ENCODE measurements at regions of chr6 and their contacts with region 1.

Region 1: GRCh38 chr6:121305957-121306607 is 28.2 kb downstream of the TBC1D32 start:
- DNase-seq: no peak
- ATAC-seq: peak in 3 of 4 donors; percentile 79 to 89 (median 88)
- H3K4me3 ChIP-seq: no peak overlapping the region
- H3K27ac ChIP-seq: no peak overlapping the region
- H3K4me1 ChIP-seq: peaks cover 0 to 2% (median 0%) of the 10 kb centered on the region in 3 donors
- H3K27me3 ChIP-seq: no peaks in the 10 kb centered on the region
- CTCF ChIP-seq: peak; percentile 11 to 52 (median 40)

Region 2: DNA sequence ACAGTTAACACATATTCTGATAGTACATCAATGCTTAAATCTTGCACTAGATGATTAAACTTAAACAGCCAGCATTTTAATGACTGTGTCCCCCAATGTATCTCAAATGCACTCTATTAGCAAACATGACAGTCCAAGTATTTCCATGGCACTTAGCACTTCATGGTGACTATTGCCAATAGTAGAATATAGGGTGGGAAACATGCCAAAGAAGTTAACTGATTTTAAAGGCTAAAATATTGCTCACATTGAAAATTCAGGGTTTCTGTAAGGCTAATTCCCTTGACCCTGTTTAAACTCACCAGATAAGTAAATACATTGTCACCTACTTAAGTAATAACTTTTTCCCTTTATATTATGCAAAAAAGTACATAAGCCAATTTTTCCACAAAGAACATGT is 238.7 kb before region 1 on chr6:
- intact Hi-C with region 1: loop called in 1 of 3 experiments (anchors 10 kb)
- DNase-seq: no peak
- ATAC-seq: no peak
- H3K4me3 ChIP-seq: no peak overlapping the region
- H3K27ac ChIP-seq: no peak overlapping the region
- H3K4me1 ChIP-seq: no peaks in the 10 kb centered on the region
- H3K27me3 ChIP-seq: no peaks in the 10 kb centered on the region
- CTCF ChIP-seq: no peak

Region 3: DNA sequence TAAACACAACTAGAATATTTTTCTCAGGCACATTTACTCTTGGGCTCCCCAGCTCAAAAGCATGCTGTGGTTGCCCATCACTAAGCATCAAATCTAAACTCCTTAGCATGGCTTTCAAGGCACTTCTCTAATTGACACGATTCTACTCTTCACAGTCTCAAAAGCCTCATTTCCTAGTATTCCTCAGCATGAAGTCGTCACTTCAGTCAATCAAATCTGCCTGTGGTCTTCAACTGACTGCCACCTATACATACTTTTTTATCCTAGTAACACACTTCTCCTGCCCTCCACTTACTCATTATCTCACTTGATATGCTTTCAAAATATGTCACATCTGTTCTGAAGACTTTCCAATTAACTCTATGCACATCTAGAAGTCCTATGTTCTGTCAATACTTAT is 82.2 kb before region 1 on chr6:
- intact Hi-C with region 1: no loop called
- DNase-seq: no peak
- ATAC-seq: no peak
- H3K4me3 ChIP-seq: no peak overlapping the region
- H3K27ac ChIP-seq: no peak overlapping the region
- H3K4me1 ChIP-seq: no peaks in the 10 kb centered on the region
- H3K27me3 ChIP-seq: no peaks in the 10 kb centered on the region
- CTCF ChIP-seq: no peak

Measured in pancreas (tissue), 10 donors.